IMR-90 (cell line): ENCODE measurements at regions of chr10 and their contacts with region 1.

Region 1: DNA sequence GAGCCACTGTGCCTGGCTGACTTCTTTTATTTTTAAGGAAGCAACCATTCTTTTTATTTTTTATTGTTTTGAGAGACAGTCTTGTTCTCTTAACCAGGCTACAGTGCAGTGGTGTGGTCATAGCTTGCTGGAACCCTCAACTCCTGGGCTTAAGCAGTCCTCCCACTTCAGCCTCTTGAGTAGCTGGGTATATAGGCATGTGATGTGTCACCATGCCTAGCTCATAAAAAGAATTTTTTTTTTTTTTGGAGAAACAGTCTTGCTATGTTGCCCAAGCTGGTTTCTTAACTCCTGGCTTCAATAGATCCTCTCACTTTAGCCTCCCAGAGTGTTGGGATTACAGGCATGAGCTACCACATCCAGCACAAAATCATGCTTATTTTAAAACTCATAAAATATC is 5.8 kb downstream of the MCU start:
- DNase-seq: no peak
- ATAC-seq: peak; percentile 11; the same call in 1 of the 2 replicates
- H3K4me3 ChIP-seq: no peak overlapping the region
- H3K27ac ChIP-seq: no peak overlapping the region
- H3K4me1 ChIP-seq: peaks cover 8% of the 10 kb centered on the region; the same call in 1 of the 2 replicates
- H3K27me3 ChIP-seq: no peaks in the 10 kb centered on the region
- CTCF ChIP-seq: no peak
- POLR2A ChIP-seq: no peak
- RAD21 ChIP-seq: no peak

Region 2: GRCh38 chr10:72709041-72709440 is 11.3 kb after region 1 on chr10:
- CTCF ChIA-PET with region 1: interaction called, 3 read pairs
- POLR2A ChIA-PET with region 1: interaction called, 17 read pairs
- dilution Hi-C with region 1: no loop called
- in situ Hi-C with region 1: no loop called
- intact Hi-C with region 1: no loop called
- DNase-seq: no peak
- ATAC-seq: peak; percentile 15; the same call in 1 of the 2 replicates
- H3K4me3 ChIP-seq: no peak overlapping the region
- H3K27ac ChIP-seq: peak overlapping the region; percentile 16; the same call in 1 of the 2 replicates
- H3K4me1 ChIP-seq: peaks cover 7% of the 10 kb centered on the region
- H3K27me3 ChIP-seq: no peaks in the 10 kb centered on the region
- CTCF ChIP-seq: no peak
- POLR2A ChIP-seq: no peak
- RAD21 ChIP-seq: no peak

Region 3: DNA sequence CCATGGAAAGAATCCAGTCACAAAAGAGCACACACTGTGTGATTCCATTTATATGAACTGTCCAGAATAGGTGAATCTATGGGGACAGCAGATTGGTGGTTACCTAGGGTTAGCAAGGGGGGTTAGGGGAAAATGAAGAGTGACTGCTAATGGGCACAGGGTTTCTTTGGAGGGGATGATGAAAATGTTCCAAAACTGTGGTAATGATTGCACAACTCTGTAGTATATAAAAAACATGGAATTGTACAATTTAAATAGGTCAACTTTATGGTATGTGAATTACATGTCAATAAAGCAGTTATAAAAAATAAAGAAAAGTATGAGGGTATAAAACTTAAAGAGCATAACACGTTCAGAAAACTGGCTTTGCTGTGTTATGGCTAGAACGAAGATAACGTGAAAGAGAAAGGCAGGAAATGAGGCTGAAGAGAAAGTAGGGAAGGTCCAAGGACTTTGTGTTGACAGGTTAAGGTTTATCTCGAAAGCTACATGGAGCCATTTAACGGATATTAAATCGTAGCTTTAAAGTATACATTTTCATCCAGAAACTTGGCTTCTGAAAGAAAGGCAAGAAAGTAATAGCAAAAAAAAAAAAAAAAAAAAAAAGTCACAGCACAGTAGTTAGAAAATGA is 762.1 kb after region 1 on chr10:
- CTCF ChIA-PET with region 1: no interaction called
- POLR2A ChIA-PET with region 1: no interaction called
- dilution Hi-C with region 1: no loop called
- in situ Hi-C with region 1: no loop called
- intact Hi-C with region 1: no loop called
- DNase-seq: peak; percentile 4
- ATAC-seq: no peak
- H3K4me3 ChIP-seq: no peak overlapping the region
- H3K27ac ChIP-seq: no peak overlapping the region
- H3K4me1 ChIP-seq: peaks cover 6% of the 10 kb centered on the region
- H3K27me3 ChIP-seq: no peaks in the 10 kb centered on the region
- CTCF ChIP-seq: no peak
- POLR2A ChIP-seq: no peak
- RAD21 ChIP-seq: no peak